ENCODE measurements at regions of chr12 and their contacts with region 1.

Region 1: DNA sequence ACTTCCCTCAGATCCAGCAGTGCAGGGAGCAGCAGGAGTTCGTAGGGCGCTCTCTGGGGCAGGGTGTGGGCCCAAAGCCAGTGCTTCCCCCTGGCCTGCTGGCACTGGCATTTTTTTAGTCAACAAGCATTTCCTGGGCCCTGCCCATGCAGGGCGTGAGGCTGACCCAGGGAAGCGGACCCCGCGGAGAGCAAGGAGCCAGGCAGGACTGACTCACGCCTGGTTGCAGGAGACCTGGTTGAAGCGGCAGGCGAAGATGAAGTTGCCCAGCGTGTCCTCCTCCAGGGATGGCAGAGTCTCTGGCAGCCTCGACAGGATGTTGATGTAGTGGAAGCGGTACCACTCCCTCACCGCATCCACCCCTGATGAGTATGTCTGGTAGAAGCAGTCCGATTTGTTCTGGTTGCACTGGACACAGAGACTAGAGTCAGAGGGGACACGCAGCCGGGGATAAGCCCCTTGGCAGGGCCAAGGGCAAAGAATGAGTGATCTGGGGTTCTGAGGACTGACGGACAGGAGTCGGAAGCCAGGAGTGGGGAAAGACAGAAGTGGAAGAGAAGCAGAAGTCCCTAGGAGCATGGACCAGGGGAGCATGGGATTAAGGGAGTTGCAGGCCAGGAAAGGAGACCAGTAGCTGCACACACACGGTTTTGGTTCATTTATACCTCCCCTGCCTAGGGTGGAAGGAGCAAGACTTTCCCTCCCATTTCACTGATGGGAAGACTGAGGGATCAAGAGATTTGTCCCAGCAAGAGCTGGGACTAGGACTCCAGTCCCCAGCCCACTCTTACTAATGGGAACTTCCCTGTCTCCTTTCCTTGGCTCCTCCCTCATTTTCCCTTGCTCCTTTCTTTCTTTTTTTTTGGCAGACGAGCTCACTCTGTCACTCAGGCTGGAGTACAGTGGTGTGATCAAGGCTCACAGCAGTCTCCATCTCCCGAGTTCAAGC is 13.3 kb downstream of the SCNN1A start:
- DNase-seq: peak; percentile 34
- ATAC-seq: peak; percentile 10
- H3K4me3 Mint-ChIP-seq: peak overlapping the region; percentile 2
- H3K27ac Mint-ChIP-seq: peak overlapping the region; percentile 45
- H3K4me1 Mint-ChIP-seq: peaks cover 28% of the 10 kb centered on the region
- H3K27me3 Mint-ChIP-seq: no peaks in the 10 kb centered on the region

Region 2: DNA sequence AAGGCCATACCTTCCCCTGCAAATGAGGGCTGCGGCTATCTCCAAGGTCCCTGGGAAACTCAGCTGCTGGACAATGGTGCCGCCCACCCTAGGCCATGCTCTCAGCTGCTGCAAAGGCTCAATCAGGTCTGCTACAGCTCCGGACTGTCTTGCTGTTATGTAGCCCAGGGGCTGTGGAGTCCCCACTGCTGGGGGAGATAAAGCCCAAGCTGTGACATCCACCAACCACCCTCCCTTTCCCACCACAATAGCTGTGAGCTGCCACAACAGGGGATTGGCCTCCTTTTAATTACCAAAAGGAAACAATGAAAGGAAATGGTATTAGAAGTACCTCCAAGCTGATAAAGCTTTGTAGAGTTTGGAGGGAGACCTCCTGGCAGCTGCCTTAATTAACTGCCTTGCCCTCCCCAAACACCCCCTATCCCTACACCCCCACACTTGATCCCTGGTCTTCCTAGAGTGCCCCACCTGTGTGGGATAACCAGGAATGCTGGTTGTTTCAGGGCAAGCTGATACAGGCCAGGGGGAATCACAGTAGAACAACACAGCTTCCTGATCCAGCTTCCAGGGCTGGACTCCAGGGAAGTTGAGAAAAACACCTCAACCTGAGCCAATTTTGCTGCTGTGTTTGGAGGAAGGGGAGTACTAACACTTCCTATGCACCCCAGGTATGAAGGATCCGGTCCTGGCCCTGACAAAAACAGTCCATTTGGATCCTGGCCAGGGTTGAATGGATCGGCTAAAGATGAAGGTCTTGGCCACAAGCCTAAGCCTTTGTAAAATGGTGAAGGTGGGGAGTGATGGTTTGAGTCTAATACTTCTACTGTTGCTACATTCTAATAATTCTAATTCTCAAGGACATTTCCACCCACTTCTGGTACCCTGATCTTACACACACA is 237.4 kb before region 1 on chr12 and contains the start of gene VWF:
- CTCF ChIA-PET with region 1: no interaction called
- POLR2A ChIA-PET with region 1: no interaction called
- intact Hi-C with region 1: no loop called
- DNase-seq: no peak
- ATAC-seq: no peak
- H3K4me3 Mint-ChIP-seq: no peak within 1 kb of the TSS
- H3K27ac Mint-ChIP-seq: no peak within 1 kb of the TSS
- H3K4me1 Mint-ChIP-seq: no peaks in the 10 kb centered on the region
- H3K27me3 Mint-ChIP-seq: no peaks in the 10 kb centered on the region
- total RNA-seq, gene VWF: 0.07 TPM in 1 of 2 experiments, not detected in the other

Region 3: DNA sequence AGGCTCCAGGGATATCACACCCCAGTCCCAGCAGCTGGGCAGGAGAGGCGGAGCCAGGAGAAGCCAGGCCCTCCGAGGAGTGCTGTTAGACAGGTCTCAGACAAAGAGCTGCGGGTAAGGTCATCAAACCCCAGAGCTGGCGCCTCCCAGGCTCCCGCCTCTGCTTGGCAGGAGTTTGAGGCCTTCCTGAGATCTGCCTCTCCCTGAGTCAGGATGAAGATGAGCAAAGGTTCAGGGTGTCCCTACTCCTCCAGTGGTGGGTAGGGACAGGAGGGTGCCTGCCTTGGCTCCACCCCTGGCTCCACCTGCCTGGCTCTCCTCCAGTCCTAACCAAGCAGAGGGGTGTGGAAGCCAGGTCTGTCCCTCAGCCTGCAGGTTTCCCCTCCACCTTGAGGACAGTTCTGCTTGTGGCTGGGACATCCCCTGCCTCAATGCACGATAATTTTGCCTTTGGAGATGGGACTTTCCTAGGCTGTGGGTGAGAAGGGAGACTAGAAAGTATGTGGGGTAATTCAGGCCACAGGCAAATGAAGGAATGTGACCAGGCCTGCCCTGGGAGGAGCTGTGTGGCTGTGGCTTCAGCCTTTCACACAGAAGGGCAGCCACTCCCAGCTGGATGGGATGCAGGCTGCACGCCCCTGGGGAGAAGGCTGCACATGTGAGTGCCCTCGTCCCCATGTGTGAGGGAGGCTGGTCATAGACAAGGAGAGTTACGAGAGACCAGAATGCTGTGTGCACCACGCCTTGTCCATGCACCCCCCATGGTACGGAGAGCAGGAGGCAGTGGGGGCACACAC is 49.4 kb before region 1 on chr12:
- CTCF ChIA-PET with region 1: no interaction called
- POLR2A ChIA-PET with region 1: no interaction called
- intact Hi-C with region 1: no loop called
- DNase-seq: peak; percentile 31
- ATAC-seq: peak; percentile 65
- H3K4me3 Mint-ChIP-seq: no peak overlapping the region
- H3K27ac Mint-ChIP-seq: no peak overlapping the region
- H3K4me1 Mint-ChIP-seq: peaks cover 7% of the 10 kb centered on the region
- H3K27me3 Mint-ChIP-seq: peaks cover 9% of the 10 kb centered on the region

Region 4: GRCh38 chr12:6341417-6342139 is 20.5 kb before region 1 on chr12 and contains the start of gene TNFRSF1A:
- CTCF ChIA-PET with region 1: interaction called, 6 read pairs
- POLR2A ChIA-PET with region 1: interaction called, 8 read pairs
- intact Hi-C with region 1: loop called (anchors 1 kb)
- DNase-seq: peak; percentile 74
- ATAC-seq: peak; percentile 45
- H3K4me3 Mint-ChIP-seq: no peak within 1 kb of the TSS
- H3K27ac Mint-ChIP-seq: no peak within 1 kb of the TSS
- H3K4me1 Mint-ChIP-seq: peaks cover 37% of the 10 kb centered on the region
- H3K27me3 Mint-ChIP-seq: no peaks in the 10 kb centered on the region
- total RNA-seq, gene TNFRSF1A: 42.1 to 58.7 TPM

Region 5: DNA sequence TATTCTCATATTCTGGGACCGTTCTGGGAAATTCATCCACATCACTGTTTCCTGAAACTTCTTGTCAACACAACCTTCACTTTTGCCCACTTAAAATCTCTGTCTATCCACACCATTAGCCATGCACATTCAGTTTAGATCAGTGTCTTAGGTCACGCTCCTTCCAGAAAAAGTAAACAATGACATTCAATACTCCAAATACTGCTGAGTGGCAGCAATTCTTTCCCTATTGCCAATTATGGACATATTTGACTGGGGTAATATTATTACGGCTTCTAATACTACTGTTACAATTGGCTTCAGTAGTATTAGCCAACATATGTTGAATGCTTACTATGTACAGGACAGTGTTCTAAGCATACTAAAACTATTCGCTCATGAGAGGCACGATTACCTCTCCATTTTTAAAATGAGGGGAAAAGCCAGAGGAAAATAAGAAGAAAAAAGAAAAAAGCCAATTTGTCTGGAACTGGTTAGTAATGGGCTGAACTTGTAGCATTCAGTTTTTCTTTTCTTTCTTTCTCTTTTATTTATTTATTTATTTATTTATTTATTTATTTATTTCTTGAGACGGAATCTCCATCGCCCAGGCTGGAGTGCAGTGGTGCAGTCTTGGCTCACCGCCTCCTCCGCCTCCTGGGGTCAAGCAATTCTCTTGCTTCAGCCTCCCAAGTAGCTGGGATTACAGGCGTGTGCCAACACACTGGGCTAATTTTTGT is 45.3 kb after region 1 on chr12:
- CTCF ChIA-PET with region 1: no interaction called
- POLR2A ChIA-PET with region 1: no interaction called
- intact Hi-C with region 1: no loop called
- DNase-seq: no peak
- ATAC-seq: no peak
- H3K4me3 Mint-ChIP-seq: no peak overlapping the region
- H3K27ac Mint-ChIP-seq: no peak overlapping the region
- H3K4me1 Mint-ChIP-seq: peaks cover 5% of the 10 kb centered on the region
- H3K27me3 Mint-ChIP-seq: no peaks in the 10 kb centered on the region

Measured in activated CD4-positive, alpha-beta T cell treated with anti-CD3 and anti-CD28 coated beads for 36 hours (primary cell).